Gastrocnemius medialis (tissue), 4 donors: ENCODE measurements at regions of chr20 and their contacts with region 1.

Region 1: GRCh38 chr20:47379433-47380150 is 23.1 kb upstream of the ZMYND8 start:
- DNase-seq: no peak
- ATAC-seq: no peak
- H3K4me3 ChIP-seq: no peak overlapping the region
- H3K27ac ChIP-seq: no peak overlapping the region
- H3K4me1 ChIP-seq: peaks cover 2 to 10% of the 10 kb centered on the region in 2 donors
- H3K27me3 ChIP-seq: no peaks in the 10 kb centered on the region
- CTCF ChIP-seq: no peak
- POLR2A ChIP-seq: no peak

Region 2: DNA sequence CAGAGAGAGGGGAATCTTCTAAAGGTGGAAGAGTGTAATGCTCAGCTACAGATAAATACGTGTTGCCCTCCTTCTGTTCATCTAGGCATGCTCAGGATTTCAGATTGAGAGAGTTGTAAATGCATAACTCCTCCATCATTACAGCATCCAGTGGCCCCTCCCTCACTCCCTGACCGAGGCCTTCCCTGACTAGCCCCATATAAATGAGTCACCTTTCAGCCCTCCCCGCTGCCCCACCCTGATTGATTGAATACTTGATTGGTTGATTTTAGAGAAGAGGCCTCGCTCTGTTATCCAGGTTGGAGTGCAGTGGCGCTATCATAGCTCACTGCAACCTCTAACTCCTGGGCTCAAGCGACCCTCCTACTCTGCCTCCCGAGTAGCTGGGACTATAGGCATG is 291.3 kb before region 1 on chr20:
- in situ Hi-C with region 1: no loop called
- intact Hi-C with region 1: no loop called
- DNase-seq: no peak
- ATAC-seq: no peak
- H3K4me3 ChIP-seq: no peak overlapping the region
- H3K27ac ChIP-seq: no peak overlapping the region
- H3K4me1 ChIP-seq: peaks cover 0 to 5% of the 10 kb centered on the region in 2 donors
- H3K27me3 ChIP-seq: no peaks in the 10 kb centered on the region
- CTCF ChIP-seq: no peak
- POLR2A ChIP-seq: no peak

Region 3: GRCh38 chr20:47205577-47206498 is 173.8 kb before region 1 on chr20:
- in situ Hi-C with region 1: no loop called
- intact Hi-C with region 1: loop called (anchors 1 kb)
- DNase-seq: peak; percentile 59 to 84
- ATAC-seq: peak; percentile 91 to 93
- H3K4me3 ChIP-seq: no peak overlapping the region
- H3K27ac ChIP-seq: peak overlapping the region in 1 of 4 donors; percentile 47
- H3K4me1 ChIP-seq: peaks cover 0 to 3% of the 10 kb centered on the region in 2 donors
- H3K27me3 ChIP-seq: no peaks in the 10 kb centered on the region
- CTCF ChIP-seq: peak; percentile 62 to 74 (median 66)
- POLR2A ChIP-seq: no peak

Region 4: GRCh38 chr20:47272893-47273590 is 106.5 kb before region 1 on chr20:
- in situ Hi-C with region 1: loop called (anchors 5 kb)
- intact Hi-C with region 1: loop called (anchors 1 kb)
- DNase-seq: peak in 1 of 2 donors; percentile 23
- ATAC-seq: peak; percentile 69 to 78
- H3K4me3 ChIP-seq: no peak overlapping the region
- H3K27ac ChIP-seq: peak overlapping the region; percentile 63 to 80 (median 78)
- H3K4me1 ChIP-seq: peaks cover 32 to 37% of the 10 kb centered on the region in 2 donors
- H3K27me3 ChIP-seq: no peaks in the 10 kb centered on the region
- CTCF ChIP-seq: peak; percentile 88 to 95 (median 93)
- POLR2A ChIP-seq: no peak

Region 5: DNA sequence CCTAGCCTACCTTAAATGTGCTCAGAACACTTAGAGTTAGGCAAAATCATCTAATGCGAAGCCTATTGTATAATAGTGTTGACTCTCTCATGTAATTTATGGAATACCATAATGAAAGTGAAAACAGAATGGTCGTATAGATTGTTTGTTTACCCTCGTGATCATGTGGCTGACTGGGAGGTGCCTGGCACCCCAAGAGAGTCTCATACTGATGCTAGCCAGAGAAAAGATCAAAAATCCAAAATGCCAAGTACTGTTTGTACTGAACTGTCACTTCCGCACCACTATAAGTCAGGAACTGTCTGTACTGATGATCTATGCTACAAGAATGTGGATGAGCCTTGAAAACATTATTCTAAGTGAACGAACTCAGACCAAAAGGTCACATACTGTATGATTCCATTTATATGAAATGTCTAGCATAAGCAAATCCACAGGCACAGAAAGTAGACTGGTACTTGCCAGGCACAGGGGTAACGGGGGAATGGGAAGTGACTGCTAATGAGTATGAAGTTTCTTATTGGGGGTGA is 45.5 kb before region 1 on chr20:
- in situ Hi-C with region 1: no loop called
- intact Hi-C with region 1: no loop called
- DNase-seq: peak; percentile 56 to 66
- ATAC-seq: peak; percentile 74 to 87
- H3K4me3 ChIP-seq: peak overlapping the region; percentile 27 to 39 (median 35)
- H3K27ac ChIP-seq: peak overlapping the region; percentile 78 to 91 (median 83)
- H3K4me1 ChIP-seq: peaks cover 68 to 88% of the 10 kb centered on the region in 2 donors
- H3K27me3 ChIP-seq: no peaks in the 10 kb centered on the region
- CTCF ChIP-seq: no peak
- POLR2A ChIP-seq: peak in 1 of 2 donors; percentile 31